Activated naive CD4-positive, alpha-beta T cell treated with anti-CD3 and anti-CD28 coated beads for 36 hours (primary cell): ENCODE measurements at regions of chr7 and their contacts with region 1.

Region 1: GRCh38 chr7:50449881-50450589 is at the start of gene FIGNL1:
- DNase-seq: peak; percentile 86
- H3K4me3 Mint-ChIP-seq: peak within 1 kb of the TSS; percentile 94
- H3K27ac Mint-ChIP-seq: peak within 1 kb of the TSS; percentile 91
- H3K4me1 Mint-ChIP-seq: peaks cover 45% of the 10 kb centered on the region
- H3K27me3 Mint-ChIP-seq: no peaks in the 10 kb centered on the region
- total RNA-seq, gene FIGNL1: 43.7 to 44.4 TPM

Region 2: DNA sequence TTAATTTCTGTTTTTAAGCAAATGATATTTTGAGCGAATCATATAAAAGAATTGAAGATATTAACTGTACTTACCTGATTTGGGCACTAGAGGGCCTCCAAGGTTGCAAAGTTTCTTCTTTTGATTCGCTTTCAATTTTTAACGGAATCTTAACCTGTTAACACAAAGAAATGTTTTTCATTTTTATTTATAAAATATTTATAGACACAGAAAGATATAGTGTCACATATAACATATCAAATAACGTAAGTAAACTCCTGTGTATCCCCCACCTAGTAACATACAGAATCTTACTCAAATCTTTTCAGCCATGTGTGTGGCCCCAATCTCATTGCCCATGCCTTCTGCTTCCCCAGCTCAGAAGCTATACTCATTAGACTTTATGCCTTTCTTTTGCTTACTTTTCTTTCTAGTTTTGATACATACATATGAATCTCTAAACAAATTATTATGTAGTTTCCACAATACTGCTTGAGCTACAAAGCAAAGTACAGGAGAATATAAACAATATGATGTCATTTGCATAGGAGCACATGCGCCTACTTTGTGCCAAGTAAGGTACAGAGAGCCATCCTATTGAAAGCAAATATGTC is 307.5 kb before region 1 on chr7:
- CTCF ChIA-PET with region 1: interaction called, 4 read pairs
- intact Hi-C with region 1: loop called (anchors 1 kb)
- DNase-seq: peak; percentile 64
- H3K4me3 Mint-ChIP-seq: peak overlapping the region; percentile 45
- H3K27ac Mint-ChIP-seq: peak overlapping the region; percentile 82
- H3K4me1 Mint-ChIP-seq: peaks cover 43% of the 10 kb centered on the region
- H3K27me3 Mint-ChIP-seq: no peaks in the 10 kb centered on the region

Region 3: DNA sequence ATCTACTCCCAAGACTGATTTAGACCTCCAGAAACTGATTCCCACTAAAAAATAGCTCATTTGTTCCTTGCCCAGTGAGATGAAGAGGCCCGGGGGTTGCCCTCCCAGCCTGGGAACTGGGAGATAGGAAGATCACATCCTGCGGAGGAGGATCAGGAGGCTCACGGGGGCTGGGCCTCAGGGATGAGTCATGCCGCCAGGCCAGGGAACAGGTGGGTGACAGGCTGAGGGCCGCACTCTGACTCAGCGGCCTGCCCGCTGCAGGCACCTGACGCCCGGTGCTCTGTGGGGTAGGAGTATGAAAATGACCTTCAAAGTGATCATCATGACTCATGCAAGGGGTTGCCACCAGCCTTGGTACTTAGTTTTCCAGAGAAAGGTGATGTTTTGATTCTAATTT is 252.5 kb before region 1 on chr7:
- CTCF ChIA-PET with region 1: no interaction called
- intact Hi-C with region 1: loop called (anchors 1 kb)
- DNase-seq: peak; percentile 83
- H3K4me3 Mint-ChIP-seq: no peak overlapping the region
- H3K27ac Mint-ChIP-seq: peak overlapping the region; percentile 52
- H3K4me1 Mint-ChIP-seq: peaks cover 37% of the 10 kb centered on the region
- H3K27me3 Mint-ChIP-seq: no peaks in the 10 kb centered on the region

Region 4: DNA sequence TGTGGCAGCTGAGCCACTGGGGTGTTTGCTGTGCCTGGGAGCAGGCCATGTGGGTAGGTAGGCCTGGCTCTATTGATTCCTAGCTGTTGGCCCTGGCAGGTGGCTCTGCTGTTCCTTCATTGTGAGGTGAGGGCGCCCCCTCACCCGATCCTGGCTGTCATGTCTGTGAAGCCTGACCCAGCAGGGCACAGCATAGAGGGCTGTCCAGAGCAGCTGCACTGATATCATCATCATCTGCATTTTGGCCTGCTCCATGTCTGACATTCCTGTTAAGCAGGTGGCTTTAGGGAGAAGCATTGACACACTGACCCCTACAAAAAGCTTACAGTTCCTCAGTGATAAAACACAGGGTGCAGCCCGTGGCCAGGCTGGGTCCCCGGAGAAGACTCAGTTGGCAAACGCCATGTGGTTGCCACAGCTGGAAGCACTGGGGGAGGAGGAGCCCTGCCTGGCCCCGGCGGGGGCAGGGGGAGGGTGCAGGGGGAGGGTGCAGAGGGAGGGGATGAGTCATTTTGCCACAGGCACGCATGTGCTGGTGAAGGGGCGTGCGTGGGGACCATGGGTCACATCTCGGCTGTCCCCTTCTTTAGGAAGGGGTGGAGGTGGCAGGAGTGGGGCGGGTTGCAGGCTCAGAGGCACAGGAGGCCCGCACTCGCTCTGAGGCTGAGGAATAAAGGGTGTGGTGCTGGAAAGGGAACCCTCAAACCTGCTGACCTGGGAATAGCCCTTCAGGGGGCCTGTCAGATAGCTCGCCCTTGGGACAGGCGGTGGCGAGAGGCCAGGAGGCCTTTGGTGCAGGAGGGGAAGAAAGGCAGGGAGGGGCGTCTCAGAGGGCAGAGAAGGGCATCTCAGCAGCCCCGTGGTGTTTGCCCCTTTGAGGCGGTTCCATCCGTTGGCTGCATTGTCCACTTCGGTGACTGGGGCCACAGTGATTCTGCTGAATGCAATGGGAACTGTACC is 114.0 kb before region 1 on chr7:
- CTCF ChIA-PET with region 1: no interaction called
- intact Hi-C with region 1: loop called (anchors 5 kb)
- DNase-seq: peak; percentile 91
- H3K4me3 Mint-ChIP-seq: no peak overlapping the region
- H3K27ac Mint-ChIP-seq: no peak overlapping the region
- H3K4me1 Mint-ChIP-seq: peaks cover 2% of the 10 kb centered on the region
- H3K27me3 Mint-ChIP-seq: no peaks in the 10 kb centered on the region

Region 5: DNA sequence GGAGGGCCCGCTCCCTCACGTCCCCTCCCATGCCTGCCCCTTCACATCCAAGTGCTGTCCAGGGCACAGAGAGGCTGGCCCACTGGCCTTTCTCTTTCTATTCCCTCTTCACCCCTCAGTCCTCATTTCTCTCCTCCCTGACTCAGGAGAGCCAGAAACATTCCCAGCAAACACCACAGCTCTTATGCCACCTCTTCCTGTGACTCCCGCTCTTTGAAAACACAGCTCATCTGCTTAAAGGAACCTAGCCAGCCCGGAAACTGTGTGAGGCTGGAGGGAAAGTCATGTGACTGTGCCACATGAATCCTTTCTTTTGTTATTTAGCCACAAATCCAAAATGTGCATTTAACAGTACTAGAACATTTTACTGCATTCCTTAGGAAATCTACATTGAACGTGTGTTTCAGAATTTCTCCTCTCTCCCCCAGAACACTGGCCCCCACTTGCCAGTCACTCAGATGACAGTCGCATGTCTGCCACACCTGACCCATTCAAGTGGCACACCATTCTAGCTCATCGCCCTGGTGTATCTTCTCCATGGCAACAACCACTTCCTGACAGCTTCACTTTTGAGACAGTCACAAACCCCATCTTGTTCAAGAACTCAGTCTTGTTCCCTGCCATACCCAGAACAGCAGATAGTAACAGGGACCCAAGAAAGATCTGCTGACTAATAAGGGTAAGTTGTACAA is 289.9 kb after region 1 on chr7:
- CTCF ChIA-PET with region 1: no interaction called
- intact Hi-C with region 1: loop called (anchors 1 kb)
- DNase-seq: peak; percentile 84
- H3K4me3 Mint-ChIP-seq: peak overlapping the region; percentile 59
- H3K27ac Mint-ChIP-seq: peak overlapping the region; percentile 84
- H3K4me1 Mint-ChIP-seq: peaks cover 34% of the 10 kb centered on the region
- H3K27me3 Mint-ChIP-seq: no peaks in the 10 kb centered on the region